HEK293 (cell line): ENCODE measurements at regions of chr1 and their contacts with region 1.

Region 1: DNA sequence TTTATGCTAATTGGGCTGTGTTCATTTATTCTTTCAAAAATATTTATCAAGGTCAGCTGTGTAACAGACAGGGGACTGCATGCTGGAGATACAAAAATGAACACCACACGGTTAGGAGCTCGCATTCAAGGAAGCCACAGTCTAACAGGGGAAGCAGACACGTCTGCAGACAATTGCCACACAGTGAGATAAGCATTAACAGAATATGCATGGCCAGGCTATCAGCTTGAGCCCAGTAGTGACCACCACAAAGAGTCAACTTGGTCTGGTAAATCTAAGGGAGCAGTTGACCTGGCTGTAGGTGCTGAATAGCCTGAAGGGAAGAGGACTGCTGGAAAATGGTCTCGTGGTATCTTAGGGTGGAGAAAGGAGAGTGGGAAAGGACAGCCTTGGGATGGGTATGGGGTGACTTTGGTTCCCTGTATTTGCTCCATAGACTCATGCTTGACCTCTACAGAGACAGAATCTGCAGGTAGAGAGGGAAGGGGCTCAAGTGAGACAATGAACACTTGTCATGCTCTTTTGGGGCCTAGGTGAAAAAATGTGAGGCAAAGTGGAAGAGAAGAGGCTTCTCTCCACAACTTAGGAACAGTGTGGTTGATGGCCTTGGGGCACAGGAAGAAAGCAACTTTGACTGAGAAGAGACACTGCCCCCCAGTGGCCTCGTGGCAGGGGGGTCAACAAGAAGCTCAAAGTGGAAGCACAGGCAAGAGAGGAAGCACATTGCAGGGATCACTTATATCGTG is 7.6 kb upstream of the NPL start:
- H3K4me3 ChIP-seq: no peak overlapping the region
- H3K27ac ChIP-seq: no peak overlapping the region
- H3K4me1 ChIP-seq: no peaks in the 10 kb centered on the region
- CTCF ChIP-seq: peak; percentile 85

Region 2: DNA sequence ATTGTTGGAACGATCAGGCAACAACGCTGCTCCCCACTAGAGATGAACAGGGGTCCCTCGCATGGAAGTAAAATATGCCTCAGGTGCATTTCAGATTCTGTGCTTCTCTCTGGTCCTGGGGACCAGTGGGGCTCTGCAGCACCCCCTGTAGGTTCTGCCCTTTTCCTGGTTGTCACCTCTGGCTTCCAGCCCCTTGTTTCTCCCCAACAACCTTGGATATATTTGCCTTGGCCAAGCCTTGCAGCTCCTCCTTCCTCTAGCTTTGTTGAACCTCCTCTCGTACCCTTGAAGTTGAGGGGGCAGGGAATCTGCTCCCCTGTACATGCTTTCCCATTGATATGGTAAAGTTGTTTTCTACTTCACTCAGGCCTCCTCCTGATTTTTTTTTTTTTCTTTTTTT is 337.5 kb before region 1 on chr1:
- CTCF ChIA-PET with region 1: interaction called, 16 read pairs
- POLR2A ChIA-PET with region 1: interaction called, 3 read pairs
- H3K4me3 ChIP-seq: no peak overlapping the region
- H3K27ac ChIP-seq: no peak overlapping the region
- H3K4me1 ChIP-seq: no peaks in the 10 kb centered on the region
- CTCF ChIP-seq: no peak

Region 3: GRCh38 chr1:182588500-182589452 is 193.2 kb before region 1 on chr1 and contains the start of gene RNASEL:
- CTCF ChIA-PET with region 1: interaction called, 668 read pairs
- POLR2A ChIA-PET with region 1: no interaction called
- H3K4me3 ChIP-seq: peak within 1 kb of the TSS; percentile 61
- H3K27ac ChIP-seq: peak within 1 kb of the TSS; percentile 1; the same call in 1 of the 2 replicates
- H3K4me1 ChIP-seq: no peaks in the 10 kb centered on the region
- CTCF ChIP-seq: no peak

Region 4: GRCh38 chr1:182614796-182615454 is 167.1 kb before region 1 on chr1:
- CTCF ChIA-PET with region 1: interaction called, 41 read pairs
- POLR2A ChIA-PET with region 1: interaction called, 3 read pairs
- H3K4me3 ChIP-seq: peak overlapping the region; percentile 43
- H3K27ac ChIP-seq: peak overlapping the region; percentile 98
- H3K4me1 ChIP-seq: peaks cover 34% of the 10 kb centered on the region
- CTCF ChIP-seq: no peak

Region 5: DNA sequence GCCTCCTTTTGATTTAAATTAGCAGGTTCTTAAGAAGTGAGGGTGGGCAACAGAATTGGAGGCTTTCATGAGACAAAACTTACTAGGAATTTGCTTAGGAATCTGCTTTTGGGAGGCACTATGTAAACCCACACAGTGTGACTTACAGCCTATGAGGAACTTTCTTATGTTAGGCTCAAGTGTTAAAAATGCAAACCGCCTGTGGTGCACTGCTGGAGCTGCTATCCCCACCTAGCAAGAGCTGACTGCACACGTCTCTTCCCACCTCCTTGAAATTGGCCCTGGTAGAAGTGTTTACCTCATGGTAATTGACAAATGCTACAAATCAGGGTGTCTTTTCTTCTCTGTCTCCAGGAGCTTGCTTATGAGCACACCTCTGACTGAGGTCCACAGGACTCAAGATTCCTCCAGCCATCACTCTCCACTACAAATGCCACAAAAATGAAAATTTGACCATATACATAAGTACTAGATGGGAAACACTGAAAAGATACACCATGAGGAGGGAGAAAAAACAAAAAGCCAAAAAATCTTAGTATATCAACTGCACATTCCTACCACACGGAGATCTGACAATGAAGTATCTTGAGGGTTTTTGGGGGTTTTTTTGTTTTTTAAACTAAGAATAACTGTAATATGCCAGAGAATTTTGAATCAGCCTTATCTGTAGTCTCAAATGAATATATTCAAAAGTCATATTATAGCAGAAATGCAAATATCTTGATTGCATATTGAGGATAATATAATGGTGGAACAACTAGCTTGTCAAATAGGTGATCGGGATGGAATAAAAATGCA is 10.6 kb before region 1 on chr1:
- CTCF ChIA-PET with region 1: interaction called, 21 read pairs
- POLR2A ChIA-PET with region 1: no interaction called
- H3K4me3 ChIP-seq: no peak overlapping the region
- H3K27ac ChIP-seq: no peak overlapping the region
- H3K4me1 ChIP-seq: no peaks in the 10 kb centered on the region
- CTCF ChIP-seq: no peak